ENCODE measurements at regions of chr10 and their contacts with region 1.

Region 1: GRCh38 chr10:107126512-107127065 is 37.9 kb downstream of the SORCS1 start:
- DNase-seq: no peak

Region 2: DNA sequence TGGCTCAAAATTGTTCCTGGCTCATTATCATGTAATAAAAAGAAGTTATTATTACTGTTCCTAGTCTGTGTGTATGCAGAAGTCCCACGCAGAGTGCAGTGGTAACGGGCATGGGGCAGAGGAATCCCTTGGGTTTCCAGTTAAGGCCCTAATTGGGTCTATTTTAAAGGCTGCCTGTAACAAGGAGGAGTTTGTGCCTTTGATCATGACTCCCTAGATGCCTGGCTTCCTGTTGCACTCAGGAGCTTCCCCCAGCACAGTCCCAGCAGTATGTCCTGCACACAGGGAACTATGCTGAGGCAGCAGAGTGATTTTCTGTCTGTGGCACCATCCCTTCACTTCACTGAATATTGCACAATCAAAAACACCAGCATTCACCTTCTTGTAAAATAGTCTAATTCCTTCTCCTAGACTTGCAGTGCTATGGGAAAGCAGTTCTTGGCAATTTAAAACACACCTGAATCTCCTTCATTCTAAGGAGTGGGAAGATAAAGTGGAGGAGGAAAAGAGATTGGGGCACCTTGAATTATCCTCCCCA is 15.0 kb after region 1 on chr10:
- intact Hi-C with region 1: no loop called
- DNase-seq: no peak

Region 3: GRCh38 chr10:107280293-107280692 is 153.7 kb after region 1 on chr10:
- intact Hi-C with region 1: no loop called
- DNase-seq: no peak

Region 4: DNA sequence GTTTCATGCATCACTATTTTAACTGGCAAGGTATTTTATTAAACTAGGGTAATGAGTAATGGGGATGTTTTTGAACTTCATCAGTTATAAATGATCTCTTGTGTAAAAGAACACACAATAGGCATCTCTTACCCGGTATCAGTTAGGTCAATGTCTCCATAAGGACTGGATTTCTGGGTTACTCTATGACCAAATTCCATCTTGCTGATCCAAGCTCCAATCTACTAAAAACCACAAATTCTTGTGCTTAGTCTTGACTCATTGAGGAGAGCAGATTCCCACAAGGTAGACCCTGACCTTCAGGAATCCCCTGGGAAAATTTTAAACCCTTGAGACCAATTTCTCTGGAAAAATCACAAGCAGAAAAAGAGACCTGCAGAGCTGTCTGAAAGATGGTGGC is 1629.1 kb after region 1 on chr10:
- intact Hi-C with region 1: loop called in 1 of 2 experiments (anchors 10 kb)
- DNase-seq: no peak

Measured in posterior vena cava (tissue), 2 donors.